Endothelial cell of umbilical vein (primary cell): ENCODE measurements at regions of chr17 and their contacts with region 1.

Region 1: DNA sequence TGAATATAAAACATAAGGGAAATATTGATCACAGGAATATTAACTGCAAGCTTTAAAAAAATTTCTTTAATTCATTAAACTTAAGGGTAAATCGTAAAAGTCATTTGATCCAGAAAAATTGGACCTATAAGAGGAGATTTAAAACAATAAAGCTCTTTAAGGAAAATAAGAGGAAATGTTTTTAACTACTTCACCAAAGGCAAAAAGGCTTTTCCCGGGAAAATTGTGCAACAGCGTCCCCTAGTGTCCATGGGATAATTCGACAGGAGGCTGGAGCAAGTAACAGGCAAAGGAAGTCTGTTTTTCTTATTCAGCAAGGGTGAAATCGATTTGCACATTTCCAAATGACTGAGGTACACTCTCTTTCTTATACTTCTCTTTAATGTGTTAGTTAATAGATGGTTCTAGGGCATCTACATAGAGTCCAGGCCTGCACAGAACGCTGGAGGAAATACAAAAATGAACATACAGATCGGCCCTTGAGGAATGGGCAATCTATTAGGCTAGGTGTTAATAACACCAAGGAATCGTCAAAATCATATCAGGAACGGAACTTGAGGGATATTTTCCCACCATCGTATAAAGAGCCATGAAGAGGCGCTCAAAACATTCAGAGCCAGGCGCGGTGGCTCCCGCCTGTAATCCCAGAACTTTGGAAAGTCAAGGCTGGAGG is 61.4 kb downstream of the ZNF18 start:
- DNase-seq: peak; percentile 14
- H3K4me3 ChIP-seq: no peak overlapping the region
- H3K27ac ChIP-seq: no peak overlapping the region
- H3K4me1 ChIP-seq: no peaks in the 10 kb centered on the region
- H3K27me3 ChIP-seq: no peaks in the 10 kb centered on the region
- CTCF ChIP-seq: peak; percentile 58 to 71
- POLR2A ChIP-seq: no peak

Region 2: GRCh38 chr17:11644261-11645212 is 291.3 kb before region 1 on chr17:
- CTCF ChIA-PET with region 1: no interaction called
- POLR2A ChIA-PET with region 1: no interaction called
- dilution Hi-C with region 1: no loop called
- intact Hi-C with region 1: loop called (anchors 1 kb)
- DNase-seq: peak; percentile 2
- H3K4me3 ChIP-seq: no peak overlapping the region
- H3K27ac ChIP-seq: no peak overlapping the region
- H3K4me1 ChIP-seq: no peaks in the 10 kb centered on the region
- H3K27me3 ChIP-seq: no peaks in the 10 kb centered on the region
- CTCF ChIP-seq: peak; percentile 41 to 49
- POLR2A ChIP-seq: no peak